Panc1 (cell line): ENCODE measurements at regions of chr22 and their contacts with region 1.

Region 1: DNA sequence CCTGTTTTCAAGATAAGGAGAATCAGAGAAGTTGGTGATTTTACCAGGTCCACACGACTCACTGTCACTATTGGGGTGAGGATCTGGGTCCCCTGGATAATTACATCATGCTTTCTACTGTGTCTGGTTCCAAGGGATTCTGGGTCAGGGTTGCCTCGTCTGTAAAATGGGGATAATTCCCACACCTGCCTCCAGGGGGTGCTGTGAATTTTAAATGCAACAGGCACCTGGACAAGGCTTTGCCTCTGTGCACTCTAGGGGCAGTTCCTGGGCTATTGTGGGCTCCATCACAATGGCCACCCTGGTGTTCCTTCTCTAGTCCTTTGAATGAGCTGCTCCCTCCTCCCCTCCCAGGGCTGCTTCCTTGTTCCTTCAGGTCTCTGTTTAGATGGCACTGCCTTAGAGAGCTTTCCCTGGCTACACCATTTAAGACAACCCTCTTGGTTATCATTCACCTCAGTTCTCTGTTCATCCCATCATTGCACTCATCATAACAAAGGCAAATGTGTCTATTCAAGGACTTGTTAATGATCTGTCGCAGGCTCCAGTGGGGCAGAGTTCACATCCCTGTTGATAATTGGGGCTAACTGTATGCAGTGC is 178.6 kb downstream of the MIAT start:
- DNase-seq: peak; percentile 15
- ATAC-seq: peak; percentile 66; the same call in 1 of the 2 replicates
- H3K4me3 ChIP-seq: no peak overlapping the region
- H3K27ac ChIP-seq: no peak overlapping the region
- H3K4me1 ChIP-seq: no peaks in the 10 kb centered on the region
- H3K27me3 ChIP-seq: no peaks in the 10 kb centered on the region
- CTCF ChIP-seq: peak; percentile 76

Region 2: DNA sequence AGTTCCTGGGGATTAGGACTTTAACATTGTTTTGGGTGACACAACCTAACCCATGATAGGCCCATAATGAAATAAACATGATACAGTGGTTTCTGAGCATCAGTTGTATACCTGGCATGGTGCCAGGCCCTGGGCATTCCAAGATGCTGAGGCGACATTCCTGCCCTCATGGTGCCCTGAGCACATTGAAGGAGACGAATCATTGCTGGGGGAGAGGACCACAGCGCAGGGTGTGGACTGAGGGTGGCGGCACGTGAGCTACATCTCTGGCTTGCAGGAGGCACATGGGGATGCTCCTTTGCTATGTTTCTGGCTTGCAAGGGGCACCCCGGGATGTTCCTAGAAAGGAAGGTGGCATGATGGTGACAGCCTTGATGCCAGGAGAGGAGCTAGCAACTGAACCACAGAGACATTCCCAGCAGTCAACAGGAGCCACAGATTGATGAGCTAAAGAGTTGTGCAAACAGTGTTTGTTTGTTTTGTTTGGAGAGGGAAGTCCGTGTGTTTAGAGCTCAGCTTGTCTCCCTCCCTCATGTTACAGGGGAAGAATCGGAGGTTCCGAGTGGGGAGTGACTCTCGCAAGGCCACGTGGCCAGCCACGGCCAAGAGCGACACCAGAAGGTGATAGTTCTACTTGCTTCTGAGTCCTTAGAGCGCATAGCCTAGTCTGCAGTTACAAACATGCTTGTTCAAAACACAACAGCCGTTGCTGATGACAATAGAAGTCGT is 72.2 kb before region 1 on chr22:
- CTCF ChIA-PET with region 1: no interaction called
- POLR2A ChIA-PET with region 1: interaction called, 15 read pairs
- in situ Hi-C with region 1: no loop called
- intact Hi-C with region 1: no loop called
- DNase-seq: no peak
- ATAC-seq: peak; percentile 60; the same call in 1 of the 2 replicates
- H3K4me3 ChIP-seq: no peak overlapping the region
- H3K27ac ChIP-seq: no peak overlapping the region
- H3K4me1 ChIP-seq: no peaks in the 10 kb centered on the region
- H3K27me3 ChIP-seq: no peaks in the 10 kb centered on the region
- CTCF ChIP-seq: no peak